ENCODE measurements at regions of chr4 and their contacts with region 1.

Region 1: DNA sequence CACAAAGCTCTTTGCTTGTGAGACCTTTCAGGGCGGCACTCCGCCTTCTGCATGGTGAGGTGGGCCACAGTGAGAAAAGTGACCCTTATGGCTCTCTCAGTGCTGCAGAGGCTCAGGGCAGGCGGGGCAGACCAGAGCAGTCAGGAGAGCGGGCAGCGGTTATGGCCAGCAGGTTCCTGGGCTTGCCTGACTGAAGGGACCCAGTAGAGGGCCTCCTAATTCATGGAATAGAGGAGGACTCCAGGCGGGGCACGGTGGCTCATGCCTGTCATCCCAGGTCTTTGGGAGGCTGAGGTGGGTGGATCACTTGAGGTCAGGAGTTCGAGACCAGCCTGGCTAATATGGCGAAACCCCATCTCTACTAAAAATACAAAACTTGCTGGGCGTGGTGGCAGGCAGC is 91.4 kb downstream of the CLNK start:
- DNase-seq: no peak
- H3K4me3 ChIP-seq: no peak overlapping the region
- H3K27ac ChIP-seq: no peak overlapping the region
- H3K27me3 ChIP-seq: no peaks in the 10 kb centered on the region
- CTCF ChIP-seq: no peak

Region 2: GRCh38 chr4:10296730-10297129 is 296.4 kb before region 1 on chr4:
- CTCF ChIA-PET with region 1: no interaction called
- POLR2A ChIA-PET with region 1: no interaction called
- DNase-seq: no peak
- H3K4me3 ChIP-seq: no peak overlapping the region
- H3K27ac ChIP-seq: no peak overlapping the region
- H3K27me3 ChIP-seq: no peaks in the 10 kb centered on the region
- CTCF ChIP-seq: no peak

Region 3: GRCh38 chr4:10526429-10527222 is 66.5 kb before region 1 on chr4:
- CTCF ChIA-PET with region 1: interaction called, 13 read pairs
- POLR2A ChIA-PET with region 1: no interaction called
- DNase-seq: no peak
- H3K4me3 ChIP-seq: no peak overlapping the region
- H3K27ac ChIP-seq: no peak overlapping the region
- H3K27me3 ChIP-seq: no peaks in the 10 kb centered on the region
- CTCF ChIP-seq: no peak

Measured in AG04450 (cell line).